ENCODE measurements at regions of chr12 and their contacts with region 1.

Region 1: DNA sequence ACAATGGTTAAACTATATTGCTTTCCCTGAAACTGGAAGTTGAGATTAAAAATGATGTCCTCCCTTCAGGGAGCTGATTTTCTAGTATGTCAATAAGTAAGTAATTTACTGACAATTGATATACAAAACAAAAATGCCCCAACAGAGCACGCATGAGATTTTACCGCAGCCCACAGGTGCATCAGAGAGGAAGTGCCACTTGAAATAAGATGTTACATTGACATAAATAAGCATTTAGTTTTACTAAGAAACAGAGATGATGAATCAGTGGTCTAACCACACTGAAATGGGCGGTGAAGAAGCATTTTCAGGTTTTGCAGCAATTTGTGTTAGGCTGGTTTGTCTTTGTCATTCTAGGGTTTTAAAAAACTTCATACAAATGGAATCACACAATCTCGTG is 8.8 kb upstream of the CLECL1 start:
- DNase-seq: peak; percentile 80
- H3K4me3 Mint-ChIP-seq: peak overlapping the region; percentile 65
- H3K27ac Mint-ChIP-seq: peak overlapping the region; percentile 95
- H3K4me1 Mint-ChIP-seq: peaks cover 61% of the 10 kb centered on the region
- H3K27me3 Mint-ChIP-seq: peaks cover 1% of the 10 kb centered on the region

Region 2: DNA sequence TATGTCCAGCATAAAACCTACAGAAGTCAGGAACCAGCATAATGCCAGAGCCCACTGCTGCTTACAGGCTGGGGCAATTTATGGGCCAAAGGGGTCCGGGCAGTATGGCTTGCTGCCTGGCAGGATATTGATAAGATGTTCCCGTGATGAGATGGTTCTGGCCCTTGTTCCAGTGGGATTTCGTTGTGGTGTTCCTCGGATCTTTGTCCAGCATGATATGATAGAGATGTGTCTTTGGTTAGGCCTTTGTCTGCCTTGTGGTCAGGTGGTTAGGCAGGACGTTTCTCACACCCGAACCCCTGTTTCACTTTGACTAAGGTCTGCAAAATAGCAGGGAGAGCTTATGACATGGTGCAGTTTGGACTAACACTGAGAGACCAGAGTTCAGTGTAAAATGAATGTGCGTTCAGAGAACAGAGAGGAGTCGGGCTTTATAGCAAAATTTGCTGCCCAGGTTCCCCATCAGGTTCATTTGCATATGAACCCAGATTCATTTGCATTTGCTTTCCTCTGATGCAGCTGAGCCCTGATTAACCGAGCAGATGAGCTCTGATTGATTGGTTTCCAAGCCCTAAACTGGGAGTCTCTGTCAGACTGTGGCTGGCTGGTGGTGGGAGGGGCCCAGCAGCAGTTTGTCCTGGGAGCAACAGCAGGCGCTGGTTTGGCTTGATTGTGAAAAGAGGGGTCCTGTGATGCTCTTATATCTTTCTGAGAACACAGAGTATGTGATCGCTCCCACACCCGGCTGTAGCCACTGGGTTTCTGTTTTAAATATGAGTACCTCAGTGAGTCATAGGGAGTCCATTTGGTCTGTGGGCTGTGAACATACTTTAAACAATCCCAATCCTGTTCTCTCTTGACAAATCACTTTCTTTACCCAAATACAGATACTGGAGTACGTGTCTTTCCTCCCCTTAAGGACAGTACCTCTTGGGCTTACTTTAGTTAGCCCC is 377.2 kb before region 1 on chr12:
- intact Hi-C with region 1: loop called (anchors 5 kb)
- DNase-seq: peak; percentile 43
- H3K4me3 Mint-ChIP-seq: peak overlapping the region; percentile 49
- H3K27ac Mint-ChIP-seq: peak overlapping the region; percentile 86
- H3K4me1 Mint-ChIP-seq: peaks cover 47% of the 10 kb centered on the region
- H3K27me3 Mint-ChIP-seq: peaks cover 51% of the 10 kb centered on the region

Region 3: GRCh38 chr12:9673404-9674225 is 68.1 kb before region 1 on chr12:
- intact Hi-C with region 1: loop called (anchors 1 kb)
- DNase-seq: peak; percentile 48
- H3K4me3 Mint-ChIP-seq: peak overlapping the region; percentile 93
- H3K27ac Mint-ChIP-seq: peak overlapping the region; percentile 97
- H3K4me1 Mint-ChIP-seq: peaks cover 58% of the 10 kb centered on the region
- H3K27me3 Mint-ChIP-seq: no peaks in the 10 kb centered on the region

Region 4: GRCh38 chr12:9760699-9761418 is 19.1 kb after region 1 on chr12 and contains the start of gene CD69:
- intact Hi-C with region 1: loop called (anchors 1 kb)
- DNase-seq: peak; percentile 83
- H3K4me3 Mint-ChIP-seq: peak within 1 kb of the TSS; percentile 99
- H3K27ac Mint-ChIP-seq: peak within 1 kb of the TSS; percentile 96
- H3K4me1 Mint-ChIP-seq: peaks cover 48% of the 10 kb centered on the region
- H3K27me3 Mint-ChIP-seq: no peaks in the 10 kb centered on the region
- total RNA-seq, gene CD69: 70.9 and 72.2 TPM in 2 replicates

Region 5: DNA sequence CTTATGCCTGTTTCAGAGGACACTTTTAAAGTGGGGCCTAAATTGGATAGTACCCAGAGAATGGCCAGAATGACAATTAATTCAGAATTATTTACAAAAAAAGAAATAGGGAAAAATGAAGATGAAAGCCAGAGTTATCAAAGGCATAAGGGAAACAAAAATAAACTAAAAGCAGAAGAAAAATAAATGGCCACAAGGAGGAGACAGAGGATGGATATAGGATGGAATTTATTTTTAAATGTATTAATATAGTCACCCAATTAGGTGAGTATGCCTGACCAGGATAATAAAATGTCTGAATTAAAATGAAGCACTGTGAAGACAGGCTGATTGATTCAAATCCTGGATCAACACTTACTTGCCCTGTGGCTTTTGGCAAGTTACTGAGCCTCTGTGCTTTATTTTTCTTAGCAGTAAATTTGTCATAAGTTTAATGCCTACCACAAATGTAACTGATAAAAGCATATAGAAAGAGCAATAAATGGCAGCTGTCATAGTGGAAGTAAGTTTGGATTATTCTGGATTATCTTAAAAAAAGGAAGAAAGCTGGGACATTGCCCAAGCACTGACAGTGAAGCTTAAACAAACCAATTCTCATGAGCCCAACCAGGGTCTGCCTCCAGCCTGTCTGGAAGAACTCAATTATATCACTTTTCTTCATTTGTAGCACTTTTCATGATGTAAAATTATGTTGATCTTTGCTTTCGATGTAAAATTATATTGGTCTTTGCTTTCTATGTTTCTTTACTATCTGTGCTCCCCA is 292.2 kb after region 1 on chr12:
- intact Hi-C with region 1: loop called (anchors 10 kb)
- DNase-seq: no peak
- H3K4me3 Mint-ChIP-seq: no peak overlapping the region
- H3K27ac Mint-ChIP-seq: no peak overlapping the region
- H3K4me1 Mint-ChIP-seq: no peaks in the 10 kb centered on the region
- H3K27me3 Mint-ChIP-seq: peaks cover 18% of the 10 kb centered on the region